Head of caudate nucleus (tissue), 42 donors: ENCODE measurements at regions of chrX and their contacts with region 1.

Region 1: DNA sequence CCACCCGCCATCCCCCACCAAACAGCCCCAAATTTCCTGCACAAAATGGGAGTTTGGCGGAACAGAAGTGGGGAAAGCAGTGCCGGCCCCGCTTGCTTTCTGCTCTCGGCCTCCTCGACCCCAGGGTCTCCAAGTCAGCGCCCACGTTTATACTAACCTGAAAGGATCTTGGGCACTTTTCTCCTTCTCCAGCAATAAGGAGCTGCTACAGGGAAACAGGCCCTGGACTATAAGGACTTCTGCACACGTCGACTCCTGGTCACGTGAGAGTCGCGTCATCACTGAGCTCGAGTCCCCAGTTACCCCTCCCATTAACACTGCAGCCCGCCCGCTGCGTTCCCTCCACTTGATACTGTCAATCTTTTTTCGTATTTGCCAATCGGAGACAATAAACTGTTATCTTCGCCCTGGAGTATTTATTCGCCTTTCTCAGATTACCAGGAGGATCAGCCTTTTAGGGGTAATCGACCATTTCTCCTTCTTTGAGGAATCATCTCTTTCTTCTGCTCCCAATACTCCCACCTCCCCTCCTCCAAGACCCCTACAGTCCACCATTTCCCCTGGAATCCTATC is at the start of gene TCEAL8:
- DNase-seq: peak; percentile 81 to 96 (median 89)

Region 2: DNA sequence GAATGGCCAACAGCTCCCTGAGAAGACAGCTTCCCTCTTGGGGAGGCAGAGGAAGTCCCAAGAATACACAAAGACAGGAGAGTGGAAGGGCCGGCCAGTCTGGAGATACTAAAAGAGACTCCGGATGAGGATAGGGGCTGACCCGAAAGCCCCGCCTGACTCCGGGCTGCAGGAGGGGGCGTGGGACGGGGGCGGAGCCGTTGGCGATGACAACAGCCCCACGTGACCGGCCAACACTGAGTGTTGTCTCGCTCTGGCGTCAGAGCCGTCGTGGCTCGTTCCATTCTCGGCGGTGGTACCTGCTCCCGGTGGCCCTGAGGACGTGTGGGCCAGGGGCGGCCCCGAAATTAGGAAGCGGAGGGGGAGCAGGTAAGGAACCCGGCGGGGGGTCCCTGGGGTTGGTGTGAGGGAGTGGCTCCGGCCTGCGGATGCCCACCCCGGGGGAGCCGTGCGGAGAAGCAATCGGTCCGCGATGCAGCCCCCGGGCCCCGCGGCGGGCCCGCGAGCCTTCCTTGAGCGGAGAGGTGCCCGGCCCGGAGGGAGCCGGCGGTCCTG is 40.1 kb before region 1 on chrX and contains the start of gene BEX4:
- intact Hi-C with region 1: loop called (anchors 5 kb)
- DNase-seq: peak; percentile 85 to 96 (median 91)

Region 3: GRCh38 chrX:103343105-103343504 is 88.1 kb after region 1 on chrX:
- intact Hi-C with region 1: no loop called
- DNase-seq: peak in 33 of 42 donors; percentile 11 to 83 (median 51)